ENCODE measurements at regions of chr1 and their contacts with region 1.

Region 1: DNA sequence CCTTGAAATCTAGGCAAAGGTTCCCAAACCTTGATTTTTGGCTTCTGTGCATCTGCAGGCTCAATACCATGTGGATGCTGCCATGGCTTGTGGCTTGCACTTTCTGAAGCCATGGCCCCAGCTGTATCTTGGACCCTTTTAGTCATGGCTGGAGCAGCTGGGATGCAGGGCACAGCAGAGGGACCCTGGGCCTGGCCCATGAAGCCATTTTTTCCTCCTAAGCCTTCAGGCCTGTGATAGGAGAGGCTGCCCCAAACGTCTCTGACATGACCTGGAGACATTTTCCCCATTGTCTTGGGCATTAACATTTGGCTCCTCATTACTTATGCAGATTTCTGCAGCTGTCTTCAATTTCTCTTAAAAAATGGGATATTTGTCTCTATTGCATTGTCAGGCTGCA is 97.4 kb downstream of the NPHS2 start:
- DNase-seq: no peak
- H3K4me3 Mint-ChIP-seq: no peak overlapping the region
- H3K27ac Mint-ChIP-seq: no peak overlapping the region
- H3K4me1 Mint-ChIP-seq: no peaks in the 10 kb centered on the region
- H3K27me3 Mint-ChIP-seq: no peaks in the 10 kb centered on the region
- CTCF ChIP-seq: no peak

Region 2: GRCh38 chr1:179340918-179341317 is 137.5 kb before region 1 on chr1:
- CTCF ChIA-PET with region 1: no interaction called
- intact Hi-C with region 1: no loop called
- DNase-seq: no peak
- H3K4me3 Mint-ChIP-seq: no peak overlapping the region
- H3K27ac Mint-ChIP-seq: peak overlapping the region; percentile 21
- H3K4me1 Mint-ChIP-seq: no peaks in the 10 kb centered on the region
- H3K27me3 Mint-ChIP-seq: no peaks in the 10 kb centered on the region
- CTCF ChIP-seq: no peak

Region 3: GRCh38 chr1:179490606-179491005 is 12.2 kb after region 1 on chr1:
- CTCF ChIA-PET with region 1: interaction called, 11 read pairs
- intact Hi-C with region 1: no loop called
- DNase-seq: no peak
- H3K4me3 Mint-ChIP-seq: no peak overlapping the region
- H3K27ac Mint-ChIP-seq: no peak overlapping the region
- H3K4me1 Mint-ChIP-seq: no peaks in the 10 kb centered on the region
- H3K27me3 Mint-ChIP-seq: no peaks in the 10 kb centered on the region
- CTCF ChIP-seq: no peak